Psoas muscle (tissue), 8 donors: ENCODE measurements at regions of chr1 and their contacts with region 1.

Region 1: DNA sequence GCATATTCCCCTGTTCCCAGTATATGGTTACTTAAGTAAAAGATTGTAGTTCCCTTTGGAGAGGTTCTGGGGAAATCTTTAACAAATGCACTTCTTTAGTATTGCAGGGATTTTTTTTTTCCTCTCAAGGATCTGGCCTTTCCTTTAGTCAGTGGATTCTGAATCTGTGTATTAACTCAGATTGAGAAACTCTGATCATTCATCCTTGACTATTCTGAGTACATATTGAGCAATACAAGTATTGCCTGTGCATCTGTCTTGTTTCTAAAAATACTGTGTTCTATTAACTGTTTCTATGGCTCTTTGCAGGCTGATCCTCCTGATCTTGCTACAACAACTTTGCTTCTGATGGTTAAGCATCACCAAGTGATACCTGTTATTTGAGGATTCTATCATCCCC is 67.8 kb upstream of the FGGY start:
- DNase-seq: no peak
- ATAC-seq: peak; percentile 84 to 92 (median 86)
- H3K4me3 ChIP-seq: no peak overlapping the region
- H3K27ac ChIP-seq: peak overlapping the region; percentile 69
- H3K4me1 ChIP-seq: peaks cover 31% of the 10 kb centered on the region
- H3K27me3 ChIP-seq: no peaks in the 10 kb centered on the region
- CTCF ChIP-seq: no peak

Region 2: DNA sequence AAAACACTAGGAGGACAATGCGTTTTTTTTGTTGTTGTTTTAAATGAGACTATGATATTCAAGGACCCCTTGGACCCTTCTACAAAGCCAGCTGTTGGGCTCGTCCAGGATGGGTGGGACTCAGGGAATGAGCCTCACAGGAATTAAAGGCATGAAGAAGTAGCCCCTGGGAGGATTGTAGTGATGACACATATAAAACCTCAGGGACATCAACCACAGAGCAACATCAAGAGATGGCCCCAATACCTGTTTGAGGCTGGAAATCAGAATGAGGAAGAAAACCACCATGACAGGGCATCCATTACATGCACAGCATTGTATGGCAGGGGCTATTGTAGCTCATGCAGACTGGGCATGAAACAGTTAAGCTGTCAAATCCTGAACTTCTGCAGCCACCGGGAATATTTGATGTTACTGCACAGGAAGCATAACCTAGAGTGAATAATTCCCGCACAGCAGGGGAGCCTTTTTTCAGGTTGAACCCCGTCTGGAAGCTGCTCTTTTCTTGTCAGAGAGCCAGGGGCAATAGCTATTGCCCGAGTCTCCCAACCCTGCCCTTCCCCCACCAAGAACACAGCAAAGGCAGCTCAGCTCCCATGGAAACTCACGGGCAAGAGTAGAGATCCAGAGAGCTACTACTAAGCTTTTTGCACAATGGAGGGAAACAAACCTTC is 72.5 kb before region 1 on chr1:
- intact Hi-C with region 1: loop called in 1 of 2 experiments (anchors 5 kb)
- DNase-seq: no peak
- ATAC-seq: no peak
- H3K4me3 ChIP-seq: no peak overlapping the region
- H3K27ac ChIP-seq: peak overlapping the region; percentile 47
- H3K4me1 ChIP-seq: peaks cover 27% of the 10 kb centered on the region
- H3K27me3 ChIP-seq: no peaks in the 10 kb centered on the region
- CTCF ChIP-seq: no peak